CD8-positive, alpha-beta T cell (primary cell): ENCODE measurements at regions of chr2 and their contacts with region 1.

Region 1: DNA sequence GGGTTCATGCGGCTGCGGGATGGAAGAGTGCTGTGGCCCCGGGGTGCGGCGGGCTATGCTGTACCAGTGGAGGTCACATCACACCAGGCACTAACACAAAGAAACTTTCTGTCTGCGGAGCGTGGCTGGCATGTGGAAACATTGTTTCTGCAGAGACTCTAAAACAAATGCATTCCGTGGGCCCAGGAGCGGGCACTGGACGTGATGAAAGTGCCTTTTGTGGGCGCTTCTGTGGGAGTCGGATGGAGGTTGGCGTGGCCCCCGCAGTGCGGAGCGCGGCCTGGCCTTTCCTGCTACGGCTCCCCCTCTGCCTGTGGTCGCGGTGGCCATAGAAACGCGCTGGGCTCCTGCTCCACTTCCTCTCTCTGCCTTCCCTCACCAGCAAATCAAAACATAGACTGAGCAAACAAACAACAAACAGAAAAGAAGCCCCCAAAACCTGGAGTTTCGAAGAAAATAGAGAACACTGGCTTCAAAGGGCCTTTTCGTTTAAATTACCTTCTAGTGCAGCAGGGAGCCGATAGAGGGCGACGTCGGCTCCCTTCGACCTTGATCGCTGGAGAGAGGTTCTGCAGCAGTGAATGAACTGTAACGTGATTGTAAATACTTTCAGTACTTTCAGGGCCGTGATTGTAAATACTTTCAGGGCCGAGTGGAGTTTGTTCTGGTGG is 51.4 kb downstream of the KIF5C start:
- DNase-seq: peak; percentile 13 to 71 (median 53)
- ATAC-seq: peak; percentile 87
- H3K4me3 ChIP-seq: peak overlapping the region; percentile 34 to 48
- H3K4me3 Mint-ChIP-seq: peak overlapping the region; percentile 75
- H3K27ac ChIP-seq: no peak overlapping the region
- H3K27ac Mint-ChIP-seq: peak overlapping the region; percentile 78
- H3K4me1 ChIP-seq: peaks cover 17% of the 10 kb centered on the region
- H3K4me1 Mint-ChIP-seq: peaks cover 12% of the 10 kb centered on the region
- H3K27me3 ChIP-seq: no peaks in the 10 kb centered on the region
- H3K27me3 Mint-ChIP-seq: no peaks in the 10 kb centered on the region
- CTCF ChIP-seq: peak; percentile 57

Region 2: DNA sequence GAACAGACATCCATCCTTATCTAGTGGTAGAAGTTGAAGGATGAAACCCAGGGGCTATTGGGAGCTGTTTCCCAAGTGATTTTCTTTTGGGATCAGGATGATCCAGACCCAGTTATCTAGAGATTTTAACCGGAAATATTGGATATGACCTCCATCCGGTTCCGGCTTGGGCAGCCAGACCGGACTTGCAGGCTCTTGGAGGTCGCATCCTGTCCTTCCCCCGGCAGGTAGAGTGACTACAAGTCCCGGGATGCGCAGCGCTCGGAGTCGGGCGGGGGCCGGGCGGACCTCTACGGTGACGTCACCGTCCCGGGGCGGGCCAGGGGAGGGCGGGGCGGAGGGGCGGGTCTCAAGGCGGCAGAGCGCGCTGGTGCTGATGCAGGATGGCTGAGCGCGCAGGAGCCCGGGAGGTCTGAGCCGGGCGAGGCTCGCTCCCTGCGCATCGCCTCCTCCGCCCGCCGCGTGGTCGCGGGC is 51.5 kb before region 1 on chr2 and contains the start of gene KIF5C:
- CTCF ChIA-PET with region 1: no interaction called
- POLR2A ChIA-PET with region 1: interaction called, 3 read pairs
- intact Hi-C with region 1: loop called in 1 of 2 experiments (anchors 2 kb)
- DNase-seq: peak; percentile 77 to 94 (median 87)
- ATAC-seq: peak; percentile 87
- H3K4me3 ChIP-seq: peak within 1 kb of the TSS; percentile 49 to 52
- H3K4me3 Mint-ChIP-seq: peak within 1 kb of the TSS; percentile 86
- H3K27ac ChIP-seq: no peak within 1 kb of the TSS
- H3K27ac Mint-ChIP-seq: peak within 1 kb of the TSS; percentile 41
- H3K4me1 ChIP-seq: peaks cover 12% of the 10 kb centered on the region
- H3K4me1 Mint-ChIP-seq: peaks cover 18% of the 10 kb centered on the region
- H3K27me3 ChIP-seq: peaks cover 0 to 5% of the 10 kb centered on the region in 2 experiments
- H3K27me3 Mint-ChIP-seq: peaks cover 16% of the 10 kb centered on the region
- CTCF ChIP-seq: no peak
- total RNA-seq, gene KIF5C: 6.4 to 6.5 TPM